ENCODE measurements at regions of chr1 and their contacts with region 1.

Region 1: DNA sequence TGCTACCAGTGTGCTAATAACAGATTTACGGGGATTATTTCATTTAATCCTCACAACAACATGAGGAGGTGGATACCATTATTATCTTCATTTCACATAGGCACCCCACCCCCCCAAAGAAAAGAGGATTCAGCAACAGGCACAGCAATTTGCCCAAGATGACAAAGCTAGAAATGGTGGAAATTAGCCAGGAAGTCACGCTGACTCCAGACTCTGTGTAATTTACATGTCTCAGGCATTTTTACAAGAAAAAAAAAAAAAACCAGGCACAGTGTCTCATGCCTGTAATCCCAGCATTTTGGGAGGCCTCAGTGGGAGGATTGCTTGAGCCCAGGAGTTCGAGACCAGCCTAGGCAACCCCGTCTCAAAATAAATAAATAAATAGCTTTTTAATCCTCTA is 37.5 kb upstream of the PRDM2 start:
- DNase-seq: no peak
- ATAC-seq: no peak
- H3K4me3 ChIP-seq: no peak overlapping the region
- H3K4me3 Mint-ChIP-seq: no peak overlapping the region
- H3K27ac ChIP-seq: no peak overlapping the region
- H3K27ac Mint-ChIP-seq: no peak overlapping the region
- H3K4me1 ChIP-seq: peaks cover 7% of the 10 kb centered on the region
- H3K4me1 Mint-ChIP-seq: peaks cover 6% of the 10 kb centered on the region
- H3K27me3 ChIP-seq: peaks cover 0 to 2% of the 10 kb centered on the region in 2 experiments
- H3K27me3 Mint-ChIP-seq: peaks cover 5% of the 10 kb centered on the region
- CTCF ChIP-seq: no peak

Region 2: GRCh38 chr1:13478692-13479091 is 183.8 kb before region 1 on chr1:
- CTCF ChIA-PET with region 1: no interaction called
- POLR2A ChIA-PET with region 1: no interaction called
- intact Hi-C with region 1: no loop called
- DNase-seq: no peak
- ATAC-seq: no peak
- H3K4me3 ChIP-seq: no peak overlapping the region
- H3K4me3 Mint-ChIP-seq: no peak overlapping the region
- H3K27ac ChIP-seq: no peak overlapping the region
- H3K27ac Mint-ChIP-seq: no peak overlapping the region
- H3K4me1 ChIP-seq: peaks cover 3% of the 10 kb centered on the region
- H3K4me1 Mint-ChIP-seq: peaks cover 9% of the 10 kb centered on the region
- H3K27me3 ChIP-seq: peaks cover 0 to 2% of the 10 kb centered on the region in 2 experiments
- H3K27me3 Mint-ChIP-seq: no peaks in the 10 kb centered on the region
- CTCF ChIP-seq: no peak

Region 3: DNA sequence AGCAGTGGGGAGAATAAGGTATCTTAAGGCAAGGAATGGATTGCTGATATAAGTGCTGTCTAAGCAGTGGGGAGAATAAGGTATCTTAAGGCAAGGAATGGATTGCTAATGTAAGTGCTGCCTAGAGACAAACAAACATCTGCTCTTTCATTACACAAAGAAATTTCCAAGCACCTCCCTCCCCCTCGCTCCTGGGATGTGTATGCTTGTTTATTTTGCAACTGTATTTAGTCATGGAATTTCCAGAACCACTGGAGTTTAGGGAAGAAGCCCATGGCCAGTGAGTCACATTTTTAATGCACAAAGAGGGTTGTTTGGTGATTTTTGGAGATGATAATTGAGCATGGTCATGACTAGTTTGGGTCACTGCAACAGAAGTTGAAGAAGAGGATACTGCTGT is 57.3 kb before region 1 on chr1:
- CTCF ChIA-PET with region 1: no interaction called
- POLR2A ChIA-PET with region 1: no interaction called
- intact Hi-C with region 1: no loop called
- DNase-seq: peak in 2 of 14 experiments; percentile 11 to 18
- ATAC-seq: no peak
- H3K4me3 ChIP-seq: no peak overlapping the region
- H3K4me3 Mint-ChIP-seq: no peak overlapping the region
- H3K27ac ChIP-seq: no peak overlapping the region
- H3K27ac Mint-ChIP-seq: no peak overlapping the region
- H3K4me1 ChIP-seq: no peaks in the 10 kb centered on the region
- H3K4me1 Mint-ChIP-seq: no peaks in the 10 kb centered on the region
- H3K27me3 ChIP-seq: peaks cover 2 to 4% of the 10 kb centered on the region in 2 experiments
- H3K27me3 Mint-ChIP-seq: peaks cover 4% of the 10 kb centered on the region
- CTCF ChIP-seq: no peak

Region 4: DNA sequence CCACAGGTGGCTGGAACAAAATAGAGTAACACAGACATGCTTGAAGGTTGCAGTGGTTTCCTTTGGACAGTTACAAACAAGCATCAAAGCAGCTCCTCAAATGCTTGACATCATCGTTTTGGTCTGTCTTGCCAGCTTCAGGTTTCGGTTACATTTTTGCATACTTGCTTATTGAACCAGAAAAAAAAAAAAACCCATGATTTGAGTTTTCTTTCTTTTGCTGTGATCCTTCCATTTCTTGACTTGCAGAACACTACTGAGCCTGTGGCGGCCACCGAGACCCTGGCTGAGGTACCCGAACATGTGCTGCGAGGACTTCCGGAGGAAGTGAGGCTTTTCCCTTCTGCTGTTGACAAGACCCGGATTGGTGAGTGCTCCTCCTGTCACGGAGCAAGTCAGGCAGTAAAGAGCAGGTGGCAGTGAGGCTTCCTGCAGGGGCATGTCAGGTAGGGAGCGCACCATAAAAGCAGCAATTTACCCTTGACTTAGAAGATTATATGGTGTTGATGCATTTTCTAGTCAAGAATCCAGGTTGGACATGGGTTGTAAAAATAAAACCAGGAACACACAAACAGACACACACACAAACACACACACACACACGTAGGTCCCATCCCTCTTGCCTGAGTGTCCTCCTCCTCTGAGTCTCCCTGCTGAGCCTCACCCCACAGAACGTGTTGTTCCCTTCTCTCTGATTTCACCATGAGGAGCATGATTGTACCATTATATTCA is 68.4 kb after region 1 on chr1:
- CTCF ChIA-PET with region 1: interaction called, 21 read pairs
- POLR2A ChIA-PET with region 1: no interaction called
- intact Hi-C with region 1: loop called (anchors 1 kb)
- DNase-seq: peak; percentile 71 to 96 (median 80)
- ATAC-seq: peak; percentile 92
- H3K4me3 ChIP-seq: peak overlapping the region; percentile 32
- H3K4me3 Mint-ChIP-seq: peak overlapping the region; percentile 84
- H3K27ac ChIP-seq: peak overlapping the region; percentile 94 to 95
- H3K27ac Mint-ChIP-seq: peak overlapping the region; percentile 98
- H3K4me1 ChIP-seq: peaks cover 37% of the 10 kb centered on the region
- H3K4me1 Mint-ChIP-seq: peaks cover 88% of the 10 kb centered on the region
- H3K27me3 ChIP-seq: no peaks in the 10 kb centered on the region
- H3K27me3 Mint-ChIP-seq: no peaks in the 10 kb centered on the region
- CTCF ChIP-seq: peak; percentile 26

Region 5: DNA sequence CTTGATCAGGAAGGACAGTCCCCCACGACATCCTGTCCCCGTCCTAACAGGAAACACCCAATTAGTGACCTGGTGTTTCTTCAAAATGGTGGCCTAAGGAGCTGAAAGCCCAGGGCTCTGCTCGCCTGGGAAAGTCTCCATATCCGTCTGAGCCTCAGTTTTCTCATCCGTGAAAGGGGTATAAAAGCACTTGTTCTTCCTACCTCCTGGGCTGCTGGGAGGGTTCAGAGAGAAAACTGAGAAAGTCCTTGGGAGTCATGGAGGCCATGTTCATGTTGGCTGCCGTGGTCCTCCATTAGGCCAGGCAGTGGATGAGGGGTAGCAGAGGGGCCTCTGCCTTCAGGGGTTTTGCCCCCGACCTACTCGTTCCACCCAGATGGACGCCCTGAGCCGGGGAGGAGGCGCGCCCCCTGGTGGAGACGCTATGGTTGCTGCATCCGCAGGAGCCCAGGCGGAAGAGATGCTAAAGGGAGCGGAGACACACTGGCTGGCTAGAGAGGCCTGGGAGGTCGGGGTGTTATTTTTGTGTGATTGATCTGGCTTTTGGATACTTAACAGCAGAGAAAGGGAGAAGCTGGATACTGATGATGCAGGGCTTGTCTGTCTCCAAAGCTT is 151.0 kb after region 1 on chr1:
- CTCF ChIA-PET with region 1: no interaction called
- POLR2A ChIA-PET with region 1: no interaction called
- intact Hi-C with region 1: loop called (anchors 1 kb)
- DNase-seq: peak; percentile 35 to 71 (median 50)
- ATAC-seq: peak; percentile 51
- H3K4me3 ChIP-seq: no peak overlapping the region
- H3K4me3 Mint-ChIP-seq: no peak overlapping the region
- H3K27ac ChIP-seq: no peak overlapping the region
- H3K27ac Mint-ChIP-seq: no peak overlapping the region
- H3K4me1 ChIP-seq: peaks cover 13% of the 10 kb centered on the region
- H3K4me1 Mint-ChIP-seq: peaks cover 24% of the 10 kb centered on the region
- H3K27me3 ChIP-seq: no peaks in the 10 kb centered on the region
- H3K27me3 Mint-ChIP-seq: no peaks in the 10 kb centered on the region
- CTCF ChIP-seq: peak; percentile 60

Region 6: DNA sequence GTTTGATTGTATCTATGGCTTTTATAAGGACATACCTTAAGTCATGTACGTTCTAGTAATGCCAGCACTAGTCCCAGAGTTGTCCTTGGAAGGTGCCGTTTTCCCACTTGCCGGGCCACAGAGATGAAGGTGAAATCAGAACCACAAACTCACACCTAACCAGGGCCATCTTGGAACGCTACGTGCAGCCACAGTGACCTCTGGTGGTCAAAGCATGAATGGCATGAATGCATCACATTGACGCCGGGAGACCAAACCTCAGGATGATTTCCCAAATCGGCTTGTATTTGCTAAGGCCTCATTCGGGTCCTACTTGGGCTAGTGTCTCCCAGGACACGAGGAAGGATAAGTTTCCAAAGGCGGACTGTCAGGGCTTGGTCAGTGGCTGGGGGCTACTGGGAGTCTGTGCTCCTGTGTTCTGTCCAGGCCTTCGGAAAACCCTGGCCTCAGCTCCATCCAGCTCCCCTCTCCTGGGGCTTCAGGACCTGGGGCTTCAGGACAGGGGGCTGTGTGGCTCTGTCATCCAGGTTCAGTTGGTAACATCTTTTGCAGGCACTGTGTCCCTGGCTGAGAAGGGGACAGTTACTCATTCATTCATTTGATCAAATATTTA is 298.0 kb after region 1 on chr1:
- CTCF ChIA-PET with region 1: no interaction called
- POLR2A ChIA-PET with region 1: no interaction called
- intact Hi-C with region 1: loop called (anchors 1 kb)
- DNase-seq: peak; percentile 41 to 78 (median 58)
- ATAC-seq: peak; percentile 56
- H3K4me3 ChIP-seq: no peak overlapping the region
- H3K4me3 Mint-ChIP-seq: no peak overlapping the region
- H3K27ac ChIP-seq: no peak overlapping the region
- H3K27ac Mint-ChIP-seq: no peak overlapping the region
- H3K4me1 ChIP-seq: peaks cover 5% of the 10 kb centered on the region
- H3K4me1 Mint-ChIP-seq: no peaks in the 10 kb centered on the region
- H3K27me3 ChIP-seq: peaks cover 0 to 9% of the 10 kb centered on the region in 2 experiments
- H3K27me3 Mint-ChIP-seq: peaks cover 68% of the 10 kb centered on the region
- CTCF ChIP-seq: peak; percentile 96

Region 7: GRCh38 chr1:15046487-15047165 is 1384.1 kb after region 1 on chr1:
- CTCF ChIA-PET with region 1: no interaction called
- POLR2A ChIA-PET with region 1: no interaction called
- intact Hi-C with region 1: loop called in 1 of 2 experiments (anchors 10 kb)
- DNase-seq: peak; percentile 7 to 64 (median 32)
- ATAC-seq: no peak
- H3K4me3 ChIP-seq: no peak overlapping the region
- H3K4me3 Mint-ChIP-seq: no peak overlapping the region
- H3K27ac ChIP-seq: no peak overlapping the region
- H3K27ac Mint-ChIP-seq: no peak overlapping the region
- H3K4me1 ChIP-seq: no peaks in the 10 kb centered on the region
- H3K4me1 Mint-ChIP-seq: no peaks in the 10 kb centered on the region
- H3K27me3 ChIP-seq: no peaks in the 10 kb centered on the region
- H3K27me3 Mint-ChIP-seq: no peaks in the 10 kb centered on the region
- CTCF ChIP-seq: peak; percentile 76

Measured in CD4-positive, alpha-beta T cell (primary cell).